Activated CD4-positive, alpha-beta T cell treated with anti-CD3 and anti-CD28 coated beads, Interleukin-2, amount 10 ng/mL, durations not matched to agents 7 days and 5 days (primary cell): ENCODE measurements at regions of chr5 and their contacts with region 1.

Region 1: DNA sequence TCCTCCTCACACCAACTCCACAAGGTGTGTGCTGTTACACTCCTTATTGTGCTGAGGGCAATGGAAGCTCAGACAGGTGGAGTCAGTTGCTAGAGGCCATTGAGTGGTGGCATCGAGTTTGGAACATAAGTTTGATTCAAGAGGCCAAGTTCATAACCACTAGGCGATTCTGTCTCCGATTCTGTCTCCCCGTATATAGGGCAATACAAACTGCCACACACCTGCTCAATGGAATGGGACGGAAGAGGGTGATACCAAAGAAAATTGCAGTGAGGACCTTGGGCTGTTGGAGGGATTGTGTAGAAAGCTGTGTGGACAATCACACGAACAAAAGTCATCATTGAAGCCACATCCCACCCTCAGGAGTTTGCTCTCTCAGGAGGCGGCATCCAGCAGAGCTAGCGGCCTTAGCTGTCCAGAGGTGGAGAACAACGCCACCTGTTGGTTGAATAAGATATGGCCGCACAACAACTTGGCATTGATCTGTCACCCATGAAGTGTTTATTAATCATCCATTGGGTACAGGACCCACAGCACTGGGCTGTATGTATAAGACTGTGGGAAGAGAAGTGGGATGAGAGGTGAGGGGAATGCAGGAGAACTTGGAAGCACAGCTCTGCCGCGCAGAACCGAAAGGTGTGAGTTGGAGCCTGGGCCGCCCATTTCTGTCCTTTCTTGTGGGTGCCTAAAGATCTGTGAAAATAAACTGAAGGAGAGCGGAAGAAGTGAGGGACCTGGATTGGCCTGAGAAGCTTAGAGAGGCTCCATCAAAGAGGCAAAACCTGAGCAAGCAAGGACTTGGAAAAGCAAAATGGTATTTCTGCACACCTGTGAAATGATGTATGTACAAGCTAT is 16.1 kb upstream of the NEUROG1 start:
- DNase-seq: peak; percentile 71
- H3K4me3 Mint-ChIP-seq: no peak overlapping the region
- H3K27ac Mint-ChIP-seq: no peak overlapping the region
- H3K4me1 Mint-ChIP-seq: no peaks in the 10 kb centered on the region
- H3K27me3 Mint-ChIP-seq: peaks cover 56% of the 10 kb centered on the region

Region 2: GRCh38 chr5:135466178-135467050 is 85.4 kb before region 1 on chr5:
- CTCF ChIA-PET with region 1: interaction called, 80 read pairs
- POLR2A ChIA-PET with region 1: no interaction called
- DNase-seq: peak; percentile 64
- H3K4me3 Mint-ChIP-seq: no peak overlapping the region
- H3K27ac Mint-ChIP-seq: no peak overlapping the region
- H3K4me1 Mint-ChIP-seq: peaks cover 3% of the 10 kb centered on the region
- H3K27me3 Mint-ChIP-seq: peaks cover 33% of the 10 kb centered on the region

Region 3: GRCh38 chr5:135539430-135540005 is 12.3 kb before region 1 on chr5:
- CTCF ChIA-PET with region 1: interaction called, 11 read pairs
- POLR2A ChIA-PET with region 1: no interaction called
- DNase-seq: no peak
- H3K4me3 Mint-ChIP-seq: no peak overlapping the region
- H3K27ac Mint-ChIP-seq: no peak overlapping the region
- H3K4me1 Mint-ChIP-seq: peaks cover 14% of the 10 kb centered on the region
- H3K27me3 Mint-ChIP-seq: peaks cover 84% of the 10 kb centered on the region